ENCODE measurements at regions of chr11 and their contacts with region 1.

Region 1: GRCh38 chr11:11876458-11876857 is 34.7 kb downstream of the USP47 start:
- DNase-seq: no peak
- H3K4me3 ChIP-seq: no peak overlapping the region
- H3K27ac ChIP-seq: no peak overlapping the region
- H3K4me1 ChIP-seq: no peaks in the 10 kb centered on the region
- H3K27me3 ChIP-seq: no peaks in the 10 kb centered on the region
- CTCF ChIP-seq: peak; percentile 21; the same call in 1 of the 2 replicates

Region 2: DNA sequence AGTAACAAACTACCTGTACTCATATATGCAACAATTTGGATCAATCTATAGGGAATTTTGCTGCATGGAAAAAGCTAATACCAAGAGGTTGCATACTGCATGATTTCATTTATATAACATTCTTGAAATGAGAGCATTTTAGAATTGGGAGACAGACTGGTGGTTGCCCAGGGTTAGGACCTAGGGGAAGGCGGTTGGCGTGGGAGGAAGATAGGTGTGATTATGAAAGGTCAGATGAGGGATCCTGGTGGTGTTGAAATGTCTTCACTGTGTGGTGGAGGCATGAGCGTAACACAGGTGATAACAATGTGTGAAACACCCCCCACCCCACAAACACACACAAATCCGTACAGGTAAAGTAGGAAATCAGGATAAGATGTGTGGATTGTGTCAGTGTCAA is 842.0 kb before region 1 on chr11:
- CTCF ChIA-PET with region 1: interaction called, 12 read pairs
- POLR2A ChIA-PET with region 1: no interaction called
- intact Hi-C with region 1: no loop called
- DNase-seq: no peak
- H3K4me3 ChIP-seq: no peak overlapping the region
- H3K27ac ChIP-seq: no peak overlapping the region
- H3K4me1 ChIP-seq: no peaks in the 10 kb centered on the region
- H3K27me3 ChIP-seq: peaks cover 12% of the 10 kb centered on the region; the same call in 1 of the 2 replicates
- CTCF ChIP-seq: no peak

Region 3: DNA sequence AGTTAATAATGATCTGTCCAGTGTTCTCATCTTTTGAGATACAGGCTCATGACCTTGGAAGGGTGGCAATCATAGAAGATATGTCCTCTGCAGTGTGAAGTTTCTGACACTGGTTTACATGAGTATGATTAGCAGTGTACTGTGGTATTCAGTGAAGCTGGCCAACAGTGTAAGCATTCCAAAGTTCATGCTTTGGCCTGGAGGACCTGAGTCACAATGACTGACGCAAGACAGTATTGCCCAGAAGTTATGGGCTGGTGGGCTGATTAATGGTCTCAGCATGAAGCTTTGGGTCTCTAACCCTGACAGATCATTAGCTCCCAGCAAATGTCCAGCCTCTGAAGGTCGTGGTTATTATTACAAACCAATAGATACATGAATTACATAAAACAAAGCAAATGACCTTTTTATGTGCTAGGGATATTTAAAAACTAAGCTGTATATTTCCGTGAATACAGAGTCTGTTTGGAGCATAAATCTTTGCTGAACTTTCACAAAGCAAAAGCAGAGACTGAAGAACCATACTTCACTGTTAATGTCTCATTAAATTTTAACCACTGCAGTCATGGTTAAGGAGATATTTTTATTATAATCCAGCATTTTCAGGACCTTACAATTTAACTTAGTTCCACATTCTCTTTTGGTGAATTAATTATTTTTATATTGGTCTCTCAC is 63.0 kb before region 1 on chr11:
- CTCF ChIA-PET with region 1: no interaction called
- POLR2A ChIA-PET with region 1: no interaction called
- intact Hi-C with region 1: no loop called
- DNase-seq: peak; percentile 5 to 79
- H3K4me3 ChIP-seq: no peak overlapping the region
- H3K27ac ChIP-seq: peak overlapping the region; percentile 71
- H3K4me1 ChIP-seq: peaks cover 14% of the 10 kb centered on the region
- H3K27me3 ChIP-seq: no peaks in the 10 kb centered on the region
- CTCF ChIP-seq: no peak

Measured in PC-9 (cell line).